IMR-90 (cell line): ENCODE measurements at regions of chr16 and their contacts with region 1.

Region 1: DNA sequence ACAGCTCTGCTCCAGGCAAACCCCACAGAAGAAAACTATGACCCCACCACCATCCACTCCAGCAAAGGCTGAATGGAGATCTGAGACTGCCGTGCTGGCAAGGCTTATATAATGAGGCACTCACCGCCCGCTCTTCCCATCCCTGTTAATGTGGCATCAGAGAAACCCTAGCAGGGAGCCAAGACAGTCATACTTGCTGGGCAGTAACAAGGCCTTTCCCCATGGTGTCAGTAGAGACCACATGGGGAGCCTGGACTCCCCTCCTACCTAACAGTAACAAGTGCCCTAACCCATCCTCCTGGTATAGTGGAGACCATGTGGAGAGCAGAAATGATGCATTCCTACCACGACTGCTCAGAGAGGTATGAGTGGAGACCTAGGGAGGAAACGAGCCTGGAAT is 235.2 kb downstream of the C16orf78 start:
- DNase-seq: peak; percentile 61
- ATAC-seq: peak; percentile 89
- H3K4me3 ChIP-seq: no peak overlapping the region
- H3K27ac ChIP-seq: no peak overlapping the region
- H3K4me1 ChIP-seq: no peaks in the 10 kb centered on the region
- H3K27me3 ChIP-seq: peaks cover 18% of the 10 kb centered on the region; the same call in 1 of the 2 replicates
- CTCF ChIP-seq: peak; percentile 69
- POLR2A ChIP-seq: no peak
- RAD21 ChIP-seq: peak; percentile 79

Region 2: DNA sequence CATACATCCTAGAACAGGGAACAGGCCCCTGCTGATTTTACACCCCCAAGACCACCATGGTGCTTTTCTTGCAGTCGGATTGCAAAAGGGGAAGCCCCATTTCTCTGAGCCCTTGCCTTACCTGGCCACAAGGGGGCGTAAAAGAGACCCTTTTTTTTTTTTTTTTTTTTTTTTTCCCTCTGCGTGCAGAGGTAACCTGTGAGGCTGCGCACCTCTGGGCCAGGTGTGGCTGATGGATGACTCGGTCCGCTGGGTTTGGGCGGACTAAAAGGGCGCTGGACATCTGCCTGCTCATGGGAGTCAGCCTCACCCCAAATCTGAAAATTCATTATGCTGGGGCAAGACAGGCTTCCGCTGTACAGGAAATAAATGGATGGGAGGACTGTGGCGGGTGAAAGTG is 608.2 kb before region 1 on chr16:
- CTCF ChIA-PET with region 1: no interaction called
- POLR2A ChIA-PET with region 1: no interaction called
- dilution Hi-C with region 1: no loop called
- in situ Hi-C with region 1: no loop called
- intact Hi-C with region 1: no loop called
- DNase-seq: no peak
- ATAC-seq: no peak
- H3K4me3 ChIP-seq: no peak overlapping the region
- H3K27ac ChIP-seq: no peak overlapping the region
- H3K4me1 ChIP-seq: no peaks in the 10 kb centered on the region
- H3K27me3 ChIP-seq: peaks cover 4% of the 10 kb centered on the region
- CTCF ChIP-seq: peak; percentile 17; the same call in 1 of the 2 replicates
- POLR2A ChIP-seq: no peak
- RAD21 ChIP-seq: no peak

Region 3: GRCh38 chr16:49755313-49755620 is 146.5 kb after region 1 on chr16:
- CTCF ChIA-PET with region 1: no interaction called
- POLR2A ChIA-PET with region 1: no interaction called
- dilution Hi-C with region 1: no loop called
- in situ Hi-C with region 1: no loop called
- intact Hi-C with region 1: loop called (anchors 2 kb)
- DNase-seq: peak; percentile 12
- ATAC-seq: peak; percentile 44; the same call in 1 of the 2 replicates
- H3K4me3 ChIP-seq: no peak overlapping the region
- H3K27ac ChIP-seq: no peak overlapping the region
- H3K4me1 ChIP-seq: no peaks in the 10 kb centered on the region
- H3K27me3 ChIP-seq: peaks cover 12% of the 10 kb centered on the region; the same call in 1 of the 2 replicates
- CTCF ChIP-seq: peak; percentile 39
- POLR2A ChIP-seq: no peak
- RAD21 ChIP-seq: peak; percentile 40

Region 4: DNA sequence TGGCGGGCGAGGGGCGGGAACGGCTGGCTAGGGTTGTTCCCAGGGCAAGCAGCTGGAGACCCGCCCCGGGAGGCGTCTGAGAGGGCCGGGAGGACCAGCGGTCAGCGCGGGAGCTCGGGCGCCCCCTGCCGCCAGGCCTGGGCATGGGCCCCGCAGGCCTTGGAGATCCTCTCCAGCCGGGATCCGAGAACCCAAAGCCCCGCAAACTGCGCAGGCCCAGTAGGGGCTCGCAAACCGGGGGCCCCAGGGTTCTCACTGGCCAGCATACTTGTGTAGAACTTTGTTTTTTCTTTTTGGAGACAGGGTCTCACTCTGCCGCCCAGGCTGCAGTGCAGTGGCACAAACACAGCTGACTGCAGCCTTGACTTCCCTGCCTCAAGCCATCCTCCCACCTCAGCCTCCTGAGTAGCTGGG is 267.9 kb after region 1 on chr16:
- CTCF ChIA-PET with region 1: no interaction called
- POLR2A ChIA-PET with region 1: no interaction called
- dilution Hi-C with region 1: no loop called
- in situ Hi-C with region 1: no loop called
- intact Hi-C with region 1: loop called (anchors 5 kb)
- DNase-seq: no peak
- ATAC-seq: peak; percentile 66; the same call in 1 of the 2 replicates
- H3K4me3 ChIP-seq: no peak overlapping the region
- H3K27ac ChIP-seq: no peak overlapping the region
- H3K4me1 ChIP-seq: no peaks in the 10 kb centered on the region
- H3K27me3 ChIP-seq: peaks cover 13% of the 10 kb centered on the region; the same call in 1 of the 2 replicates
- CTCF ChIP-seq: peak; percentile 51
- POLR2A ChIP-seq: no peak
- RAD21 ChIP-seq: peak; percentile 24; the same call in 1 of the 2 replicates

Region 5: GRCh38 chr16:49921791-49922456 is 313.1 kb after region 1 on chr16:
- CTCF ChIA-PET with region 1: no interaction called
- POLR2A ChIA-PET with region 1: no interaction called
- dilution Hi-C with region 1: no loop called
- in situ Hi-C with region 1: no loop called
- intact Hi-C with region 1: loop called (anchors 1 kb)
- DNase-seq: peak; percentile 17
- ATAC-seq: peak; percentile 42; the same call in 1 of the 2 replicates
- H3K4me3 ChIP-seq: no peak overlapping the region
- H3K27ac ChIP-seq: no peak overlapping the region
- H3K4me1 ChIP-seq: no peaks in the 10 kb centered on the region
- H3K27me3 ChIP-seq: no peaks in the 10 kb centered on the region
- CTCF ChIP-seq: peak; percentile 47
- POLR2A ChIP-seq: no peak
- RAD21 ChIP-seq: peak; percentile 58